ENCODE measurements at regions of chr9 and their contacts with region 1.

Region 1: GRCh38 chr9:129139993-129140396 is 28.8 kb downstream of the PTPA start:
- DNase-seq: peak; percentile 70 to 92 (median 73)
- H3K4me3 ChIP-seq: peak overlapping the region; percentile 78 to 82
- H3K4me3 Mint-ChIP-seq: peak overlapping the region; percentile 86 to 95 (median 90)
- H3K27ac ChIP-seq: peak overlapping the region; percentile 90
- H3K27ac Mint-ChIP-seq: peak overlapping the region; percentile 90 to 99 (median 92)
- H3K4me1 ChIP-seq: peaks cover 38% of the 10 kb centered on the region
- H3K4me1 Mint-ChIP-seq: peaks cover 15 to 37% (median 29%) of the 10 kb centered on the region in 4 donors
- H3K27me3 ChIP-seq: no peaks in the 10 kb centered on the region
- H3K27me3 Mint-ChIP-seq: no peaks in the 10 kb centered on the region

Region 2: GRCh38 chr9:128628471-128629048 is 511.4 kb before region 1 on chr9:
- CTCF ChIA-PET with region 1: no interaction called
- POLR2A ChIA-PET with region 1: no interaction called
- intact Hi-C with region 1: no loop called
- DNase-seq: no peak
- H3K4me3 ChIP-seq: no peak overlapping the region
- H3K4me3 Mint-ChIP-seq: no peak overlapping the region
- H3K27ac ChIP-seq: no peak overlapping the region
- H3K27ac Mint-ChIP-seq: peak overlapping the region in 2 of 7 donors; percentile 25 to 41
- H3K4me1 ChIP-seq: no peaks in the 10 kb centered on the region
- H3K4me1 Mint-ChIP-seq: no peaks in the 10 kb centered on the region
- H3K27me3 ChIP-seq: no peaks in the 10 kb centered on the region
- H3K27me3 Mint-ChIP-seq: no peaks in the 10 kb centered on the region

Region 3: DNA sequence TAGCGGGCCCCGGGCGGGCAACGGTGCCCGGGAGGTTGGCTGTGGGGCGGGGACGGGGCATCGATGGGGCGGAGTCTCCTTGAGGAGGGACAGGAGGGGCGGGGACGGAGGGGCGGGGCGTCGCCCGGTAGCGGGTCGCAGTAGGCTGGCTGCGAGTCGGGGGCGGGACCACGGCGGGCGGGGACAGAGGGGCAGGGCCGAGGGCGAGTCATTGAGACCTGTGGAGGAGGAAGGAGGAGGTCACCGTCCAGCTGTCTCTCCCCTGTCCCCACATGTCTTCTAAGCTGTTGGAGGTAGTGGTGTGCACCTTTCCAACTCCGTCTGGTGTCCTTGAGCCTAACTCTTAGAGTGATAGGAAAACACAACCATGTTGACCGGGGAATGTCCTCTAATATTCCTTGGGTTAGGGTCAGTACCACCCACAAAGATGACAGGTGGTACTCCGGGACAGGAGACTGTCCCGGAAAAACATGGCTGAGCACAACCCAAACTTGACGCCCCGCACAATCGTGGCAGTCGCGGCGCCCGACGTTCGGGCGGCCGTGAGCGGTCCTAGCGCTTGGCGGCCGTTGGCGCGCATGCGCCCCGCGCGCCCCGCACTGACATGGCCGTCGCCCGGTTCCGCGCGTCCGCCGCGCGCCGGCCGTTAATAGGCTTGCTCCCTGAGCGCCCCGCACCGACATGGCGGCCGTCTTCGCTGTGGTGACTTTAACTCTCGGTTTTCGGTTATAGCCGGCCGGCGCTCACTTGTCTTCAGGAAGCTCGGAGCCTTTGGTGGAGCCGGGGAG is 29.1 kb before region 1 on chr9 and contains the starts of genes CRAT and PTPA:
- CTCF ChIA-PET with region 1: interaction called, 9 read pairs
- POLR2A ChIA-PET with region 1: interaction called, 11 read pairs
- intact Hi-C with region 1: loop called (anchors 2 kb)
- DNase-seq: peak; percentile 90 to 96 (median 91)
- H3K4me3 ChIP-seq: peak within 1 kb of the TSS; percentile 90 to 93
- H3K4me3 Mint-ChIP-seq: peak within 1 kb of the TSS; percentile 92 to 99 (median 94)
- H3K27ac ChIP-seq: peak within 1 kb of the TSS; percentile 84
- H3K27ac Mint-ChIP-seq: peak within 1 kb of the TSS; percentile 83 to 97 (median 96)
- H3K4me1 ChIP-seq: peaks cover 40% of the 10 kb centered on the region
- H3K4me1 Mint-ChIP-seq: peaks cover 17 to 46% (median 29%) of the 10 kb centered on the region in 4 donors
- H3K27me3 ChIP-seq: no peaks in the 10 kb centered on the region
- H3K27me3 Mint-ChIP-seq: no peaks in the 10 kb centered on the region
- total RNA-seq, gene CRAT: 11.2 to 12.4 TPM
- total RNA-seq, gene PTPA: 49.0 to 51.3 TPM

Region 4: DNA sequence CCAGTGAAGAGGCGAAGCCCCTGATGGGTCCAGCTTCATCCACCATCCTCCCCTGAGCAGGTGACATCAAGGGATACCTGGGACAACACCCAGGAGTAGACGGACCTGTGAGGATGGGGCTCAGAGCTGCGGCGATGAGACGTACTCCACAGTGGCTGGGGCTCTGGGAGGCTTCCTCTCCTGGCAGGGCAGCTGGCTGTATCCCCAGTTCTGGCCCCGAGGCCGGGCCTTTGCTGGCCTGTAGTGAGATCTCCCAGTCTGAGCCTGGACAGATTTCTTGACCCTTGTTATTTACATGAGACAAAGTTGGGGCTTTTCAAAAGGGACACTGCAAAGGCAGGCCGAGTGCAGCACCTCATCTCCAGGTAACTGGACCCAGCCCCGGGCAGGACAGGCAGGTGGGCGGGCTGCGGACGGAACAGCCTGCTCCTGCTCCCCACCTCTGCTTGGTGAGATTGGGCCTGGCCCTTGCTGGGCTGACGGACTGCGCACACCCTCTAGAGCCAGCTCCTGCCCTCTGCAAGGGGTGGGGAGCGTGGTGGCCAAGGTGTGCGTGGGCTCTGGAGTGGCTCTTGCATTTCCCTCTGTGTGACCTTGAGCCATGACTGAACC is 15.0 kb after region 1 on chr9:
- CTCF ChIA-PET with region 1: interaction called, 24 read pairs
- POLR2A ChIA-PET with region 1: interaction called, 3 read pairs
- intact Hi-C with region 1: no loop called
- DNase-seq: no peak
- H3K4me3 ChIP-seq: no peak overlapping the region
- H3K4me3 Mint-ChIP-seq: no peak overlapping the region
- H3K27ac ChIP-seq: no peak overlapping the region
- H3K27ac Mint-ChIP-seq: no peak overlapping the region
- H3K4me1 ChIP-seq: no peaks in the 10 kb centered on the region
- H3K4me1 Mint-ChIP-seq: no peaks in the 10 kb centered on the region
- H3K27me3 ChIP-seq: no peaks in the 10 kb centered on the region
- H3K27me3 Mint-ChIP-seq: no peaks in the 10 kb centered on the region

Region 5: DNA sequence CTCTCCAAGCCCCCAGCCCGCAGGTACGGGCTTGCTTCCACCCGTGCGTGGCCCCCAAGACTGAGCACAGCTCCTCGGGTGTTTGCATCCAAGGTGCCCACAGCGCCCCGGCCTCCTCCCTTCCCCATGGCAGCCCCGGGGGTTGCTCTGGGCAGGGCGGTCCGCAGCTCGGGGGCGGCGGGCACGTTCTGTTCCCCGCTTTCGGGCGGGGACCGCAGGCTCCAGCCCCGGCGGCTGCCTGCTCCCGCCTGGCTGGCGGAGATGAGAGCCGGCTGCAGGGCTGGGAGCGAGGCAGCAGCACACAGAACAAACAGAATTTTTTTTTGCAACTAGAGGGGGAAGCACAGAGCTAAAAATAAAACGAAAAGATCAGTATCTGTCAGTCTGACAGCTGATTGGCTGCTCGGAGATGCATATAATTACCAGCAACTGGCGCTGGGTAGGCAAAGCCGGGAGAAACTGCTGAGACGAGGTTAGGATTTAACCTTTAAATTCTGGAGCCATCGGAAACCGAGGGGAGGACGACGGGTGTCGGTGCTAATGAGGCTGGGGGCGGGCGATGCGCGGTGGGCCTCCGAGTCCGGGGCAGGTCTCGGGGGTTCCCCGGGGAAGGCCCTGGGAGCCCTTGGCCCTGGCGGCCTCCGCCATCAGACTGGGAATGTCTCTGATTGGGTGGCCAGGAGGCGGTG is 180.7 kb after region 1 on chr9:
- CTCF ChIA-PET with region 1: interaction called, 6 read pairs
- POLR2A ChIA-PET with region 1: no interaction called
- intact Hi-C with region 1: loop called (anchors 1 kb)
- DNase-seq: peak; percentile 63 to 74 (median 68)
- H3K4me3 ChIP-seq: peak overlapping the region in 1 of 2 donors; percentile 51
- H3K4me3 Mint-ChIP-seq: peak overlapping the region; percentile 62 to 90 (median 82)
- H3K27ac ChIP-seq: no peak overlapping the region
- H3K27ac Mint-ChIP-seq: peak overlapping the region in 6 of 7 donors; percentile 50 to 97 (median 78)
- H3K4me1 ChIP-seq: peaks cover 20% of the 10 kb centered on the region
- H3K4me1 Mint-ChIP-seq: peaks cover 5 to 20% (median 9%) of the 10 kb centered on the region in 4 donors
- H3K27me3 ChIP-seq: no peaks in the 10 kb centered on the region
- H3K27me3 Mint-ChIP-seq: peaks cover 0 to 1% of the 10 kb centered on the region in 2 donors

Region 6: DNA sequence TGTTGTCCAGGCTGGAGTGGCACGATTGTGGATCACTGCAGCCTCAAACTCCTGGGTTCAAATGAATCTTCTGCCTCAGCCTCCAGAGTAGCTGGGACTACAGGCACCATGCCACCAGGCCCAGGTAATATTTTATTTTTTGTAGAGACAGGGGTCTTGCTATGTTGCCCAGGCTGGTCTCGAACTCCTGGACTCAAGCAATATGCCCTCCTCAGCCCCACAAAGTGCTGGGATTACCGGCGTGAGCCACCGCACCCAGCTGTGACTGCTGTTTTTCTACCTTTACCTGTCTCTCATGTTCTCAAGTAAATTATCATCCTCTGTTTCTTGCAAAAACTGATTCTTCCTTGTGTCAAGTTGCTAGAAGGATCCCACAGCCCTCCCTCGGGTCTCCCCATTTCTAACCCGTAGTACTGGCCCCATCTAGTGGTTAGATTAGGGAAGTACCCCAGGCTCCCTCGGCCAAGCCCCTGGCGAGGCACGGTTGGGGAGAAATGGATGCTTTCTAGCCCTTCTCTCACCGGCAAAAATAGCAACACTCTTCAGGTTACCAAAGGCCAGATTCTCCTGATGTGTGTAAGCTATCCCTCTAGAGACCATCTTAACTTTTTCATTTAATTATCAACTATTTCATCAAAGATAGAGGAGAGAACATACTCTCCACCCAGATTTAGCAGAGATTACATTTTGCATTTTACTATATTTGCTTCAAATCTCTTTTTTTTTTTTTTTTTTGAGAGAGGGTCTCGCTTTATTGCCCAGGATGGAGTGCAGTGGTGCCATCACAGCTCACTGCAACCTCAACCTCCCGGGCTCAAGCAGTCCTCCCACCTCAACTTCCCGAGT is 643.7 kb after region 1 on chr9:
- CTCF ChIA-PET with region 1: interaction called, 13 read pairs
- POLR2A ChIA-PET with region 1: no interaction called
- intact Hi-C with region 1: loop called (anchors 1 kb)
- DNase-seq: peak; percentile 68 to 78 (median 74)
- H3K4me3 ChIP-seq: no peak overlapping the region
- H3K4me3 Mint-ChIP-seq: no peak overlapping the region
- H3K27ac ChIP-seq: no peak overlapping the region
- H3K27ac Mint-ChIP-seq: peak overlapping the region in 2 of 7 donors; percentile 20 to 61
- H3K4me1 ChIP-seq: peaks cover 3% of the 10 kb centered on the region
- H3K4me1 Mint-ChIP-seq: peaks cover 0 to 4% (median 3%) of the 10 kb centered on the region in 4 donors
- H3K27me3 ChIP-seq: no peaks in the 10 kb centered on the region
- H3K27me3 Mint-ChIP-seq: peaks cover 5 to 6% of the 10 kb centered on the region in 2 donors